ENCODE measurements at regions of chr17 and their contacts with region 1.

Region 1: DNA sequence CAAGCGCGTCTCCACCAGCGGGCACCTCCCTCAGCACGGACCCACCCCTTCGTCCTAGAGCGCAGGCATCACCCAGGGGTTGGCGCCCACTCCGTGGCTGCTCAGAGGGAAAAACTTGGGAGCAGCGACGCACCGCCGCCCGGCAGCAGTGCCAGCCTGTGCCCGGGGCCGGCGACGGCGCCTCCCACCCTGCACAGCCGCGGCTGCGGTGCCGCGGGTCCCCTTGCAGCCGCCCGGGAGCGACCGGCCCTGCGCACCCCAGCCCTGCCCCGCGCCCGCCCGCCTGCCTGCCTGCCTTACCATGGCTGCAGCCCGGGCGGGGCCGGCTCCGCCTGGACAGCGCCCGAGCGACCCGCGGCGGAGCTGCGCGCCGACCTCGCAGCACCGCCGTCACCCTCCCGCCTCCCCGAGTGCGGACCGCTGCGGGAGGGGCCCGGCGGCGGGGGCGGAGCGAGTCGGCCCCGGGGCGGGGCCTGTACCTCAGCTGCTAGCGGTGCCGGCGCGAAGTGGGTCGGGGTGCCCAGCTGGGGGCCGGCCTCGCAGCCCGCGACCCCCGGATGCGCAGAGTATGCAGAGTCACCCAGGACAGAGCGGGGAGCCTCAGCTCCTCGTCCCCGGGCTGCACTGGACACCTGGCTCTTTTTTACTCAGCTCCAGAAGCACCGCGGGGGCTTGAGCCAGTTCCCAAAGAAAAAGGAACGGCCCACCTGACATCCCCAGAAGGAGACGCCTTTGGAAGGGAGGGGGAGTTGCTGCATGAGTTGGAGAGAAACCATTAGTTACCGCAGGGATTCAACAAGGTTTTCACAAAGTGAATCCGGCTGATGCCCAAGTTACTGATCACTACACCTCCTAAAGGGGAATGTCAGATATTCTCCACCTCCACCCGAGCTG is 17.5 kb upstream of the MTMR4 start:
- DNase-seq: peak; percentile 39 to 79 (median 72)
- H3K4me3 ChIP-seq: peak overlapping the region in 2 of 4 donors; percentile 40 to 75
- H3K27ac ChIP-seq: peak overlapping the region in 4 of 5 donors; percentile 41 to 95 (median 80)
- H3K4me1 ChIP-seq: peaks cover 61 to 77% of the 10 kb centered on the region in 2 donors
- H3K27me3 ChIP-seq: no peaks in the 10 kb centered on the region
- CTCF ChIP-seq: no peak
- POLR2A ChIP-seq: peak; percentile 68 to 80

Region 2: DNA sequence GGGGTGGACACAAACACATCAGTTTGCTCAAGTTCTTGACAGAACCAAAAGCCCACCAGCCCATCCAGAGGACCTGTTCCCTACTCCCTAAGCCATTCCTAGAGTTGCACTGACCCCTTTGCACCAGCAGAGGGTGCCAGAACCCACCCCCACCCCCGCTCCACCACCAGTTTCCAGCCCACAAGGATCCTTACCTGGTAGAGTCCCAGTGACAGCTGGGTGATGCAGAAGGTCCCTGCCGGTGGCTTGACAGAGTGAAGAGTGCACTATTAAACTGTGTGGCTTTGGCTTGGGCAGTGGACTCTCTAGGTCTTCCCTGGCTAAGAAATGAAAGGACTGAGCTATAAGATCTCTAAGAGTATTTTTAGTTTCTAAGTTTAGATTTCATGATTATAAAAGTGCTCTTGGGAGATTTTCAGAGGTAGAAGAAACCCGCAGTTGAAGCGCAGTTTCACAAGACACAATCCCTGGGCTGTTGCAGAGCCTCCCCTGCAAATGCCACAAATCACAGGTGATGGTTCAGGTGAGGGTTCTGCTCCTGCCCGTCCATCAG is 55.9 kb after region 1 on chr17:
- intact Hi-C with region 1: loop called in 1 of 2 experiments (anchors 10 kb)
- DNase-seq: peak; percentile 42 to 70 (median 51)
- H3K4me3 ChIP-seq: no peak overlapping the region
- H3K27ac ChIP-seq: no peak overlapping the region
- H3K4me1 ChIP-seq: no peaks in the 10 kb centered on the region
- H3K27me3 ChIP-seq: no peaks in the 10 kb centered on the region
- CTCF ChIP-seq: peak; percentile 50 to 88 (median 78)
- POLR2A ChIP-seq: no peak

Region 3: GRCh38 chr17:58666858-58667619 is 135.1 kb after region 1 on chr17:
- intact Hi-C with region 1: no loop called
- DNase-seq: peak; percentile 48 to 84 (median 72)
- H3K4me3 ChIP-seq: peak overlapping the region in 1 of 4 donors; percentile 20
- H3K27ac ChIP-seq: peak overlapping the region in 2 of 5 donors; percentile 64 to 77
- H3K4me1 ChIP-seq: no peaks in the 10 kb centered on the region
- H3K27me3 ChIP-seq: no peaks in the 10 kb centered on the region
- CTCF ChIP-seq: no peak
- POLR2A ChIP-seq: no peak

Region 4: DNA sequence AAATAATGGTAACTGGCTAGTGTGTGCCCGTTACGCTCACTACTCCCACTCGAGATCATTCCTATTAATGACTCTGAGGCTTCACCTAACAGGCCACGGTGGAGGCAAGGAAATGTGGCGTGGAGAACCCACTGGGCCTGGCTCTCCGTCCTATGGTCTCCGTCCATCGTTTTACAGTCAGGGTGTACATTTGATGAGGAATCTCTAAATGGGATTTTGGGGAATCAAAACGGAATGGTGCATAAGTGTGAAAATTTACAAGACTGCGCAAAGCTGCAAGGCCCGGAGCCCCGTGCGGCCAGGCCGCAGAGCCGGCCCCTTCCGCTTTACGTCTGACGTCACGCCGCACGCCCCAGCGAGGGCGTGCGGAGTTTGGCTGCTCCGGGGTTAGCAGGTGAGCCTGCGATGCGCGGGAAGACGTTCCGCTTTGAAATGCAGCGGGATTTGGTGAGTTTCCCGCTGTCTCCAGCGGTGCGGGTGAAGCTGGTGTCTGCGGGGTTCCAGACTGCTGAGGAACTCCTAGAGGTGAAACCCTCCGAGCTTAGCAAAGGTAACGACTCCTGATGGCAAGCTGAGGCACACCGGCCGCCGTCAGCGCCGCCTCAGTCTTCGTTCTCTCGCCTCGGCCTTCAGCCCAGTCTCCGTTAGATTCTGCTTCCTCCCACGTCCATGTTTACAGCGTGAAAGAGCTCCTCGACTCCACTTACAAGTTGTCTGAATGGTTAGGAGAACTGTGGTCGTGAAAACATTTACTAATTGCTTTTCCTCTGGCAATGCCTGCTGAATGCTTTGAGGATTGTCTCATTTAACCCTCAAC is 160.5 kb after region 1 on chr17 and contains the start of gene RAD51C:
- intact Hi-C with region 1: loop called in 1 of 2 experiments (anchors 10 kb)
- DNase-seq: peak; percentile 85 to 92 (median 88)
- H3K4me3 ChIP-seq: peak within 1 kb of the TSS in 3 of 4 donors; percentile 17 to 70 (median 68)
- H3K27ac ChIP-seq: peak within 1 kb of the TSS in 4 of 5 donors; percentile 72 to 82 (median 78)
- H3K4me1 ChIP-seq: peaks cover 0 to 13% of the 10 kb centered on the region in 2 donors
- H3K27me3 ChIP-seq: no peaks in the 10 kb centered on the region
- CTCF ChIP-seq: no peak
- POLR2A ChIP-seq: peak; percentile 44 to 50
- total RNA-seq, gene RAD51C: 11.7 to 45.7 (median 31.0) TPM

Region 5: GRCh38 chr17:58900171-58900907 is 368.4 kb after region 1 on chr17:
- intact Hi-C with region 1: no loop called
- DNase-seq: no peak
- H3K4me3 ChIP-seq: no peak overlapping the region
- H3K27ac ChIP-seq: no peak overlapping the region
- H3K4me1 ChIP-seq: no peaks in the 10 kb centered on the region
- H3K27me3 ChIP-seq: no peaks in the 10 kb centered on the region
- CTCF ChIP-seq: no peak
- POLR2A ChIP-seq: no peak

Measured in adrenal gland (tissue), 19 donors.